A673 (cell line): ENCODE measurements at regions of chr16 and their contacts with region 1.

Region 1: DNA sequence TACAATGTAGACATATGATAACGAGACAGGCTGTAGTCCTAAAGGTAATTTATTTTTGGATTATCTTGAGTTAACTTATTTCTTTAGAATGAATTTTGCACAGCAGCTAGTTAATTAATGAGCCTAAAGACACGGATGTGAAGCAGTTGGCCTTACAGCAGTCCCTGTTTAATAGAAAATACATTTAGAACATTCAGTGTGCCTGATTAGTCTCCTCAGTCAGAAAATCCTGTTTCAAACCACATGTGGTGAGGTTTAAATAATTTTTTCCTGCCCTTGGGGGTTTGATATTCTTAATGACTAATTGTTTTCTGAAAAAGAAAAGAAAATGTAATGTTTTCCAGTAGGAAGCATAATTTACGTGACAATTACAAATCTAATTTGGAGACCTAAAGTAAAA is 494.2 kb upstream of the CDH8 start:
- DNase-seq: no peak
- H3K4me3 ChIP-seq: no peak overlapping the region
- H3K27ac ChIP-seq: no peak overlapping the region
- H3K4me1 ChIP-seq: no peaks in the 10 kb centered on the region
- H3K27me3 ChIP-seq: no peaks in the 10 kb centered on the region
- CTCF ChIP-seq: no peak

Region 2: DNA sequence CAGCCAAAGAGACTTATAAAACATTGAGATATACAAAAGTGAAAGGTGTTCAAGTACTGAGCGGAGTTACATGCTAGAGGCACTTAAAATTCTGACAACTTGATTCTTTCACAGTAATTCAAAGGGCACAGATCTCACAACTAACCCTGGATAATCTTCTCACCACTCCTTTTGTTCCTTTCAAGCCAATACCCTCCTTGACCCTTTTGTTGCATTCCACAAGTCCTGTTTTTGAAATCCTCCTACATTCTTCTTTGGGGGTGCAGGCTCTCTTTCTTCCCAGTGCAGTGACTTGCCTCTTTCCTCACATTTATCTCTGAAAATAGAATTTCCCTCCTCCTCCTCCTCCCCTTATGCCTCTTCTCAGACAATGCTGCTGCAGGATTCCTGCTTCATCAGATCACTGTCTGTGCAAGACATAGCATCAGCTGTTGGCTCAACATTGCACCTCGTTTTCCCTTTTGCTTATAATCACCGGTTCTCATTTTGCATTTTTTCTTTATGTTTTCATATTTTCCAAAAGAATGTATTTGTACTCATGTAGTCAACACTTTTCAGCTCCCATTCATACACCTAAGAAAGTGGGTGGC is 693.5 kb before region 1 on chr16:
- CTCF ChIA-PET with region 1: no interaction called
- POLR2A ChIA-PET with region 1: interaction called, 10 read pairs
- intact Hi-C with region 1: no loop called
- DNase-seq: no peak
- H3K4me3 ChIP-seq: no peak overlapping the region
- H3K27ac ChIP-seq: no peak overlapping the region
- H3K4me1 ChIP-seq: peaks cover 28% of the 10 kb centered on the region
- H3K27me3 ChIP-seq: no peaks in the 10 kb centered on the region
- CTCF ChIP-seq: no peak

Region 3: DNA sequence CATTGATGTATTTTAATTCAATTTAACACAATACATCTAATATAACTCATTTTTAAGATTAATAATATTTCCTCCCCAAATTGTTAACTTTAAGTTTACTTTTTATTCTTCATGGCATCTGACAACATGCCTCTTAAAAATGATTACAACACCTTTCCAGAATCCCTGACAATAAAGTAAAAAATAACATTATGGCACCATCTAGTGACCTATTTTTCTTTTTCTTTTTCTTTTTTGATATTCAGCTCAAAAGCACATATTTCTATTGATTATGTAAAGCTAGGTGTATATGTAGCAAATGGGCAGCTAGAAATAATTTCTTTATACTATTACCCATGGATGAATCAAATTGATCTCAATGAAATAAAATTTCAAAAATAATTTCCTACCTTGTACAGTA is 340.1 kb after region 1 on chr16:
- CTCF ChIA-PET with region 1: no interaction called
- POLR2A ChIA-PET with region 1: no interaction called
- intact Hi-C with region 1: no loop called
- DNase-seq: no peak
- H3K4me3 ChIP-seq: no peak overlapping the region
- H3K27ac ChIP-seq: no peak overlapping the region
- H3K4me1 ChIP-seq: no peaks in the 10 kb centered on the region
- H3K27me3 ChIP-seq: no peaks in the 10 kb centered on the region
- CTCF ChIP-seq: 0 out of 2 replicates have a peak, but pooled peaks have one; percentile 30